Activated CD8-positive, alpha-beta T cell treated with anti-CD3 and anti-CD28 coated beads, Interleukin-2, amount 10 ng/mL, durations not matched to agents 7 days and 5 days (primary cell): ENCODE measurements at regions of chr15 and their contacts with region 1.

Region 1: GRCh38 chr15:75453703-75454470 is 2.4 kb upstream of the SIN3A start:
- DNase-seq: peak; percentile 99
- ATAC-seq: peak; percentile 43
- H3K4me3 Mint-ChIP-seq: peak overlapping the region; percentile 84
- H3K27ac Mint-ChIP-seq: peak overlapping the region; percentile 98
- H3K4me1 Mint-ChIP-seq: peaks cover 26% of the 10 kb centered on the region
- H3K27me3 Mint-ChIP-seq: no peaks in the 10 kb centered on the region

Region 2: DNA sequence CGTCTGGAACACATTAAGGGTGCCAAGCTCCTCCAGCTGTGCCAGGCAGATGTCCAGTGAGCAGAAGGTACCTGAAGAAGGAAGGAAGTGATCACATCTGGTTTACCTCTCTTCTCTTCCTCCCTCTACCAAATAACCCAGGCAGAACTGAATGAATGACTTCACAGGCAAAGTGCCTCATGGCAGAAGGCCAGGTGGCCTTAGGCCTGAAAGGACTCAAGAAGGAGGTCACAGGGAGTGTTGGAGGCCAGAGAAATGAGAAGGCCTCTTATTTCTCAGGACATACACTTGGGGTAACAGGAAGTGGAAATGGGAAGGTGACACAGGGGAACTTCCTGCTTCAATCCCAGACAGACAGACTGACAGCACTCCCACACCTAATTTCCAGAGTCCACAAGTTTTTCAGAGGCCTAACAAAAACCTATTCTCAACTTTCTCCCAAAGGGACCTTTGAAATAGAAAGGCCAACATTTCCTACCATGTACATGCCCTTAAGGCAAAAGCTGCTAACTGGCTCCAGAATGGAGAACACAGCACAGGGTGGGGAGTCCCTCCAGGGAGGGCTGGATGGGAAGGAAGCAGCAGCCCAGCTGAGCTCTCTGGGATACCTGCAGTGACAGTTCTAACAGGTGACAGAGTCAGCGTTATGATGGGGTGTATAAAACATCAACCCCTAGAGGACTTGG is 15.2 kb after region 1 on chr15:
- CTCF ChIA-PET with region 1: interaction called, 7 read pairs
- POLR2A ChIA-PET with region 1: interaction called, 11 read pairs
- DNase-seq: no peak
- ATAC-seq: no peak
- H3K4me3 Mint-ChIP-seq: no peak overlapping the region
- H3K27ac Mint-ChIP-seq: peak overlapping the region; percentile 70
- H3K4me1 Mint-ChIP-seq: peaks cover 20% of the 10 kb centered on the region
- H3K27me3 Mint-ChIP-seq: no peaks in the 10 kb centered on the region

Region 3: DNA sequence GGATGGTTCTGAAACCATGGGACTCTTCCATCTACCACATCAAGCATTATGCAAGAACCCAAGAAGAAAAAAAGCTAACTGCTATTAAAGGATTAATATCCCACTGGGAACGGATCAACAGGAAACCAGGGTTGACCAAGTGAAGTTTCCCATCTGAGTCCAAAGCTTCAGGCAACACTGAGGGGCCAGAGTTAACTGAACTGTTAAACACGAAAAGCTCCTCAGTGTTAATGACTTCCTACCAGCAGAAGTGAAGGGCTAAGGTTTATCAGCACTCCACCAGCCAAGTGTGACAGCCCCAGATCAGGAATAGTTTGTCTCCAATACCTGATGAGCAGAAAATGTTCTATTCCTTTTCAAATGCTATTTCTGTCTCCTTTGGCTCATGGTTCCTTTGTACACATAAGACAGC is 88.5 kb after region 1 on chr15:
- CTCF ChIA-PET with region 1: no interaction called
- POLR2A ChIA-PET with region 1: no interaction called
- DNase-seq: no peak
- ATAC-seq: no peak
- H3K4me3 Mint-ChIP-seq: no peak overlapping the region
- H3K27ac Mint-ChIP-seq: no peak overlapping the region
- H3K4me1 Mint-ChIP-seq: peaks cover 17% of the 10 kb centered on the region
- H3K27me3 Mint-ChIP-seq: no peaks in the 10 kb centered on the region

Region 4: DNA sequence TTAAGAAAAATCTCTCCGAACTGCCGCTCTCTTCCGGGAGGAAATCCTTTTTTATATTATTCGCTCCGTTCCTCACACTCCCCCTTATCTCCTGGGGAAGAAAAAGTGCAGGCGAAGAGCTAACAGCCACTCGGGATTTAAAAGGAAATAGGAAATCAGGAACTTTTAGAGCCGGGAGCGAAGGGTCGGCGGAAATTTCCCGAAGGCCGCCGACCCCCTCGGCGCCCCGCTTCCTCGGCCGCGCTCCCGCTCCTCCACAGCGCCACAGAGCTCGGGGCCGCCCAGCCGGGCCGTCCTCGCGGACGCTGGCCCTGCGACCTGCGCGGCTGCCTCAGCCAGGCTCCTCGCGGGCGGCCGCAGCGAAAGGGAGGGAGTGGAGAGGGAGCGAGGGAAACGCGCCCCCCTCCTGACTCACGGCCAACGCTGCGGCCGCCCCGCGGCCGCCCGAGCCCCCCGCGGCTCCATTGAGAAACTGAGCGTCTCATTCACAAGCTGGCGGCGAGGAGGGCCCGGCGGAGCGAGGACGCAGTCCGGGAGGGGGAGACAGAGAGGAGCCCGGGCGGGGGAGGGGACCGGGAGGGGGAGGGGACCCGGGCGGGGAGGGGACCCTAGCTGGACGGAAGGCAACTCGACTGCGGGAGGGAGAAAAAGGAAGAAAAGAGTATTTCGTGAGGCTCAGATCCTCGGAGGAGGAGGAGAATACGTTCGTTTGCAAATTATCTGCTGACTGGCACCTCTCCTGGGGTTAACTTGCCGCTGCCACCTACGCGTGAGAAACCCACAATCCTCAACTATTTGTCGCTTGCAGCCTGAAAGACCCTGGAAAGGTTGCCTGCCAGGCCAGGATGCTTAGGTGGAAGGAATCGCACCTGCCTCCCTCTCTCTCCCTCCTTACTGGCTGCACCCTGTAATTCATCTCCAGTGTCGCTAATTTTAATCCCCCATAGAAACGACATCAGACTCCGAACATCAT is 125.3 kb after region 1 on chr15 and contains the start of gene PTPN9:
- CTCF ChIA-PET with region 1: interaction called, 10 read pairs
- POLR2A ChIA-PET with region 1: interaction called, 20 read pairs
- DNase-seq: peak; percentile 84
- ATAC-seq: peak; percentile 83
- H3K4me3 Mint-ChIP-seq: peak within 1 kb of the TSS; percentile 92
- H3K27ac Mint-ChIP-seq: peak within 1 kb of the TSS; percentile 94
- H3K4me1 Mint-ChIP-seq: peaks cover 18% of the 10 kb centered on the region
- H3K27me3 Mint-ChIP-seq: no peaks in the 10 kb centered on the region
- total RNA-seq, gene PTPN9: 46.3 to 48.7 TPM

Region 5: GRCh38 chr15:75606711-75607699 is 153.1 kb after region 1 on chr15:
- CTCF ChIA-PET with region 1: interaction called, 4 read pairs
- POLR2A ChIA-PET with region 1: interaction called, 17 read pairs
- DNase-seq: peak; percentile 74
- ATAC-seq: peak; percentile 80
- H3K4me3 Mint-ChIP-seq: peak overlapping the region; percentile 63
- H3K27ac Mint-ChIP-seq: peak overlapping the region; percentile 96
- H3K4me1 Mint-ChIP-seq: peaks cover 50% of the 10 kb centered on the region
- H3K27me3 Mint-ChIP-seq: no peaks in the 10 kb centered on the region

Region 6: GRCh38 chr15:75639709-75640482 is 186.0 kb after region 1 on chr15 and contains the start of gene IMP3:
- CTCF ChIA-PET with region 1: interaction called, 48 read pairs
- POLR2A ChIA-PET with region 1: interaction called, 102 read pairs
- DNase-seq: peak; percentile 98
- ATAC-seq: peak; percentile 95
- H3K4me3 Mint-ChIP-seq: peak within 1 kb of the TSS; percentile 88
- H3K27ac Mint-ChIP-seq: peak within 1 kb of the TSS; percentile 95
- H3K4me1 Mint-ChIP-seq: peaks cover 34% of the 10 kb centered on the region
- H3K27me3 Mint-ChIP-seq: no peaks in the 10 kb centered on the region
- total RNA-seq, gene IMP3: 97.9 to 99.1 TPM